ENCODE measurements at regions of chr15 and their contacts with region 1.

Region 1: GRCh38 chr15:78315686-78316282 is 16.4 kb upstream of the SKIC8 start:
- DNase-seq: peak; percentile 56
- CTCF ChIP-seq: no peak

Region 2: DNA sequence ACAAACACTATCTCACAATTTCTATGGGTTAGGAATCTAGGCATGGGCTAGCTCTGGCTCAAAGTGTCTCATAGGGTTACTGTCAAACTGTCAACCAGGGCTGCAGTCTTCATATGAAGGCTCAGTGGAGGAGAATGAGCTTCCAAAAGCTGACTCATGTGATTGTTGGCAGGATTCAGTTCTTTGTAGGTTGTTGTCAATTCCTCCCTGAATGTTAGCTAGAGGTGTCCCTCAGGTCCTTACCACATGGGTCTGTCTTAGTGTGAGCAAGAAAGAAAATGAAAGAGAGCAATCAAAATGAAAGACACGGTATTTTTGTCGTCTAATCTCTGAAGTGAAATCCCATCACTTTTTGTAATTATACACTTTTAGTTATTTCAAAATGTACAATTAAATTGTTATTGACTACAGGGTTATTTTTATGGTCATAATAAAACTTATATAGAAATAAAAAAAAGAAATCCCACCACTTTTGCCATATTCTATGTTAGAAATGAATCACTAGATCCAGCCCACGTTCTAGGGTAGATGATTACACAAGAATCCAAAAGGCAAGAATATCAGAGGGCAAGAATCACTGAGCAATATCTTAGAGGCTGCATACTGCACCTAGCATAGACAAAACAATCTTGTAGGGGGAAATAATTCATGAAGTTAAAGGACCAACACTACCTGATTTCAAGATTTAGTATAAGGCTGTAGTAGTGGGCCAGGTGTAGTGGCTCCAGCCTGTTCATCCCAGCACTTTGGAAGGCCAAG is 89.8 kb before region 1 on chr15:
- in situ Hi-C with region 1: no loop called
- DNase-seq: peak; percentile 70
- CTCF ChIP-seq: no peak

Region 3: GRCh38 chr15:78422571-78423340 is 107.0 kb after region 1 on chr15:
- in situ Hi-C with region 1: loop called (anchors 10 kb)
- DNase-seq: peak; percentile 75
- CTCF ChIP-seq: peak; percentile 91